ENCODE measurements at regions of chr17 and their contacts with region 1.

Region 1: DNA sequence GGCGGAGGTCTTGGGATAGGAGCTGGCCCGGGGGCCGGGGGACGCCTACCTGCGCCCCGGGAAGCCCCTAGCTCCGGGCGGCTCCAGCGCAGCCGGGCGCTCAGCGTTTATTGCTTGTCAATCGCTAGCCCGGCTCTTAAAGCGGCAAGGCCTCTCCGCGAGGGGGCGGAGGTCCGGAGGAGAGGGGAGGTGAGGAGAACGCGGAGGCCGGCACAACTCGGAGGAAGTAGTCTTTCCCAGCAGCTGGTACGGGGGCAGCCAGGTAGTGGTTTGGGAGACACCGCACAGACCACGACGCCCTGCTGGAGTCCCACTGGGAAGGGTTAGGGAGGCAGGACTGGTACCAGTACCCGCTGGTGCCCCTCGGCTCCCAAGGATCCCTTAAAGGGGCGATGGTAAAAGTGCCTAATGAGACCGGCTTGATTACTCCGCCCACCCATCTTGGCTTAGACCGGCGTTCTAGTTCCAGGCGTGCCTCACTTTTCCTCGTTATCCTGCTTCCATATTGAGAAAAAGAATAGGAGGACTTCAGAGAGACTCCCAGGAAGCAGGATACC is at the start of gene MPP2:
- DNase-seq: peak; percentile 68 to 86 (median 77)
- H3K4me3 ChIP-seq: peak within 1 kb of the TSS; percentile 30 to 77 (median 58)
- H3K27ac ChIP-seq: no peak within 1 kb of the TSS
- H3K4me1 ChIP-seq: peaks cover 2 to 27% (median 22%) of the 10 kb centered on the region in 4 experiments
- H3K27me3 ChIP-seq: peaks cover 3 to 49% (median 31%) of the 10 kb centered on the region in 5 experiments

Region 2: GRCh38 chr17:43924558-43924957 is 17.1 kb after region 1 on chr17:
- CTCF ChIA-PET with region 1: interaction called, 29 read pairs
- POLR2A ChIA-PET with region 1: no interaction called
- DNase-seq: no peak
- H3K4me3 ChIP-seq: no peak overlapping the region
- H3K27ac ChIP-seq: no peak overlapping the region
- H3K4me1 ChIP-seq: peaks cover 0 to 18% (median 15%) of the 10 kb centered on the region in 4 experiments
- H3K27me3 ChIP-seq: peaks cover 0 to 17% (median 15%) of the 10 kb centered on the region in 5 experiments